PC-3 (cell line): ENCODE measurements at regions of chr11 and their contacts with region 1.

Region 1: DNA sequence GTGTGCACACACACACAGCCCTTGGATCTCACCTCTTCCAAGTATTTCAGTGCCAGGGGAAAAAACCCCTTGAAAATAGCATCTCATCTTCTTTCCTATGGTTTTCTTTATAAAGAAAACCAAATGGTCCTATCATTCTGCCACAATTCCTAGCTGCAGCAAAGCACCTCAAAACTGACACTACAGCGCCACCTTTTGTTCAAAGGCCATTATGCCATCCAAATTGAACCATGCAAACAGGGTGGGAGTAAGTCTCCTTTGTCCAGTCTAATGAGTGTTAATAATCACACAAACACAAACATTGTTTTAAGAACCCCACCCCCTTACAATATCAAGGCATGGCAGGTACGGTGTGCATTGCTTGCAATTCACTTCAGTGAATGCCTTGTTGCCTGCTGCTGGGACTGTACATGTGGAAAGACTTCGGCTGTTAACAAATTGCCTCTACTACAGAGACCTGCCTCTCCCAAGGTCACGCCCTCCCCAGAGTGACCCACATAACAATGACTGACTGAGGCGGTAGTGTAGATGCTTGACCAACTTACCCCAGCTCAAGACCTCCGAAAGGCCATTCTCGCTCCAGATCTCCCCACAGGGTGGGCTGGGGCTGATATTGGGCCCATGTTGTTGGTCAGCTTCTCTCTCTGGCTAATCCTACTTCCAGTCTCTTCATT is 31.7 kb downstream of the FAM181B start:
- DNase-seq: peak; percentile 81
- ATAC-seq: no peak
- H3K4me3 ChIP-seq: no peak overlapping the region
- H3K27ac ChIP-seq: no peak overlapping the region
- H3K4me1 ChIP-seq: no peaks in the 10 kb centered on the region
- H3K27me3 ChIP-seq: no peaks in the 10 kb centered on the region
- CTCF ChIP-seq: peak; percentile 94

Region 2: GRCh38 chr11:81658722-81659121 is 1043.3 kb before region 1 on chr11:
- CTCF ChIA-PET with region 1: no interaction called
- POLR2A ChIA-PET with region 1: no interaction called
- intact Hi-C with region 1: loop called (anchors 5 kb)
- DNase-seq: peak; percentile 38
- ATAC-seq: no peak
- H3K4me3 ChIP-seq: no peak overlapping the region
- H3K27ac ChIP-seq: no peak overlapping the region
- H3K4me1 ChIP-seq: no peaks in the 10 kb centered on the region
- H3K27me3 ChIP-seq: no peaks in the 10 kb centered on the region
- CTCF ChIP-seq: peak; percentile 60

Region 3: DNA sequence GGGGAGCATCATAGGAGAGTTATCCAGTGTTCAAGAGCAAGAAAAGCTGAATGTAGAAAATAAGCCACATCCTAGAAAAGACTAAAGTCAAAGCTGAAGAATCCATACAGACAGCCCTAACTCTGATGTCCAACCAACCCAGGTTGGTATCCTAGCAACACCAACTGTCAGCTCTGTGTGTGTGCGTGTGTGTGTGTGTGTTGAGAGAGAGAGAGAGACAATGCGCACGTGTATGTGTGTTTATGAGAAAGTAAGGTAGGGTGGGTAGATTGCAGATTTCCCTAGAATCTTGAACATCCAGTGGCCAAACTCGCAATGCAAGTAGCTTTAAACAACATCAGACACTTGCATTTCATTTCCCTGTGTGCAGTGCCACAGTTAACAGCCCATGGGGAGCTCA is 243.2 kb before region 1 on chr11:
- CTCF ChIA-PET with region 1: no interaction called
- POLR2A ChIA-PET with region 1: no interaction called
- intact Hi-C with region 1: no loop called
- DNase-seq: no peak
- ATAC-seq: no peak
- H3K4me3 ChIP-seq: no peak overlapping the region
- H3K27ac ChIP-seq: no peak overlapping the region
- H3K4me1 ChIP-seq: no peaks in the 10 kb centered on the region
- H3K27me3 ChIP-seq: no peaks in the 10 kb centered on the region
- CTCF ChIP-seq: no peak

Region 4: DNA sequence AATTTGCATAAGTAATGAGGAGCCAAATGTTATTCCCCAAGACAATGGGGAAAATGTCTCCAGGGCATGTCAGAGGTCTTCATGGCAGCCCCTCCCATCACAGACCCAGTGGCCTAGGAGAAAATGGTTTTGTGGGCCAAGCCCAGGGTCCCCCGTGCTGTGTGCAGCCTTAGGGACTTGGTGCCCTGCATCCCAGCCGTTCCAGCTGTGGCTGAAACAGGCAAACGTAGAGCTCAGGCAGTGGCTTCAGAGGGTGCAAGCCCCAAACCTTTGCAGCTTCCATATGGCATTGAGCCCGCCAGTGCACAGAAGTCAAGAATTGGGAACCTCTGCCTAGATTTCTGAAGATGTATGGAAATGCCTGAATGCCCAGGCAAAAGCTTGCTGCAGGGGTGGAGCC is 48.2 kb before region 1 on chr11:
- CTCF ChIA-PET with region 1: no interaction called
- POLR2A ChIA-PET with region 1: no interaction called
- intact Hi-C with region 1: no loop called
- DNase-seq: no peak
- ATAC-seq: no peak
- H3K4me3 ChIP-seq: no peak overlapping the region
- H3K27ac ChIP-seq: no peak overlapping the region
- H3K4me1 ChIP-seq: no peaks in the 10 kb centered on the region
- H3K27me3 ChIP-seq: no peaks in the 10 kb centered on the region
- CTCF ChIP-seq: no peak

Region 5: DNA sequence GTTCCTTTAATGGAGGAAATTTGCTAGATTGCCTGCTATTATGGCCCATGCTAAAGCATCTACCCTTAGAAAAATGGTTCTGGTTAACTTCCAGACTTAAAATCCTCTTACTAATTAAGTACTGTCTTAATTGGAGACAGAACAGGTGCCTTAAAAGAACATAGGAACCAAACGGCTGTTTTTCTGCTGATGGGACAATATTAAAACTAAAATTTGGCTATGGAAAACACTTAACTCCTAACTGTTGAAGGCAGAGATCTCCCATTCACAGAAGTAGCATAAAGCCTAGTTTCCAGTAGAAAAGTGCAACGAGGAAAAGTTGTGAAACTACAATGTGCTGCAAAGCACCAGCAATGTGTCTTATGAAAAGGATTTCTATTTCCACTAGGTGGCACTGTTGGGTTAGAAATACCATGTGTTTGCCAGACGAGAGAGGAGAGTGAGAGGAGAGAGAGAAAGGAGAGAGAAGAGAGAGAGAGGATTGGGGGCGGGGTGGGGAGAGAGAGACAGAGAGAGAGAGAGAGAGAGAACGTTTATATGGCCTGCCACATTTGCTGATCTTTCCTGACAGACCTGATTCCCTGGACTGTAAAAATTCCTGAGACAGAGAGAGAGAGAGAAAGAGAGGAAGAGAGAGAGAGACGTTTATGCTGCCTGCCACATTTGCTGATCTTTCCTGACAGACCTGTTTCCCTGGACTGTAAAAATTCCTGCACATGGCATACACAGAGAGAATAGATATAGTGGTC is 19.8 kb before region 1 on chr11:
- CTCF ChIA-PET with region 1: no interaction called
- POLR2A ChIA-PET with region 1: no interaction called
- intact Hi-C with region 1: no loop called
- DNase-seq: peak; percentile 92
- ATAC-seq: peak; percentile 89
- H3K4me3 ChIP-seq: peak overlapping the region; percentile 42; the same call in 1 of the 2 replicates
- H3K27ac ChIP-seq: peak overlapping the region; percentile 25; the same call in 1 of the 2 replicates
- H3K4me1 ChIP-seq: peaks cover 26% of the 10 kb centered on the region
- H3K27me3 ChIP-seq: peaks cover 12% of the 10 kb centered on the region; the same call in 1 of the 2 replicates
- CTCF ChIP-seq: peak; percentile 90

Region 6: GRCh38 chr11:82750643-82751139 is 48.7 kb after region 1 on chr11:
- CTCF ChIA-PET with region 1: no interaction called
- POLR2A ChIA-PET with region 1: no interaction called
- intact Hi-C with region 1: no loop called
- DNase-seq: no peak
- ATAC-seq: no peak
- H3K4me3 ChIP-seq: no peak overlapping the region
- H3K27ac ChIP-seq: no peak overlapping the region
- H3K4me1 ChIP-seq: no peaks in the 10 kb centered on the region
- H3K27me3 ChIP-seq: peaks cover 29% of the 10 kb centered on the region; the same call in 1 of the 2 replicates
- CTCF ChIP-seq: no peak